CD4-positive, alpha-beta memory T cell (primary cell): ENCODE measurements at regions of chr17 and their contacts with region 1.

Region 1: DNA sequence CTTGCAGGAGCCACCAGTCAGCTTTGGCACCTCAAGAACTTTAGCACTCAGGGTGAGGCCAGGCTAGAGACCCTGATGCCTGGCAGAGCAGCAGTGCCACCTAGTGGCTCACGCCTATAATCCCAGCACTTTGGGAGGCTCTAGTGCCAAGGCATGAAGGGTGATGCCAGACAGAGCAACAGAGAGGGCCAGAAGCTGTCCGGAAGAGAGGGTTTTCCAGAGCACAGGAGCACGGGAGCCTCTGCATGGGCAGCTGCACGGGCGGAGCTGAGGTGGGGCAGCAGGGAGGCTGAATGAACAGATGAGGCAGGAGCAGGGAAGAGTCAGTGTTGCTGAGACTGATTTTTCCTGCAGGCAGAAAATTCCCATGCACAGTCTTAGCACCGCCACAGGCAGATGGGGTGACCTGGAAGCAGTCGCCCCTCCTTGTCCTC is 38.9 kb downstream of the MYH3 start:
- DNase-seq: peak in 4 of 5 donors; percentile 39 to 46 (median 46)
- H3K4me3 ChIP-seq: no peak overlapping the region
- H3K4me3 Mint-ChIP-seq: no peak overlapping the region
- H3K27ac ChIP-seq: no peak overlapping the region
- H3K27ac Mint-ChIP-seq: peak overlapping the region in 1 of 7 donors; percentile 38
- H3K4me1 ChIP-seq: no peaks in the 10 kb centered on the region
- H3K4me1 Mint-ChIP-seq: peaks cover 0 to 4% (median 0%) of the 10 kb centered on the region in 4 donors
- H3K27me3 ChIP-seq: no peaks in the 10 kb centered on the region
- H3K27me3 Mint-ChIP-seq: peaks cover 4 to 8% of the 10 kb centered on the region in 2 donors

Region 2: DNA sequence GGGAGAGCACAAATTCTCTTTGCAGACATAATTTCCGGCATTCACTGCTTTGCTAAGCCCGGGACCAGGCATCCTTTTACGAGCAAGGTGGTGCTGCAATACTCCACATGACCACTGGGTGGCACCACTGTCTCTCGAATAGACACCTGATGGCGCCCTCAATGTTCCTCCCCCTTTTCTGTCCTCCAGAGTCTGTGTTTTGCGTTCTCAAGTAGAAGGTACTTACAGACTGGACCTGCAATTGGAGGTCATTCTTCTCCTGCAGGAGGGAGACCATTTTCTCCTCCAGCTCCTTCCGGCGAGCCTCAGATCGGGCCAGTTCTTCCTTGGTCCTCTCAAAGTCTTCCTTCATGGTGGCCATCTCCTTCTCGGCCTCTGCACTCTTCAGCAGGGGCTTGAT is 290.6 kb before region 1 on chr17:
- CTCF ChIA-PET with region 1: interaction called, 3 read pairs
- POLR2A ChIA-PET with region 1: no interaction called
- intact Hi-C with region 1: loop called (anchors 5 kb)
- DNase-seq: peak in 4 of 5 donors; percentile 24 to 39 (median 37)
- H3K4me3 ChIP-seq: no peak overlapping the region
- H3K4me3 Mint-ChIP-seq: no peak overlapping the region
- H3K27ac ChIP-seq: no peak overlapping the region
- H3K27ac Mint-ChIP-seq: peak overlapping the region in 1 of 7 donors; percentile 4
- H3K4me1 ChIP-seq: no peaks in the 10 kb centered on the region
- H3K4me1 Mint-ChIP-seq: peaks cover 0 to 7% (median under 1%) of the 10 kb centered on the region in 4 donors
- H3K27me3 ChIP-seq: no peaks in the 10 kb centered on the region
- H3K27me3 Mint-ChIP-seq: peaks cover 0 to 2% of the 10 kb centered on the region in 2 donors

Region 3: DNA sequence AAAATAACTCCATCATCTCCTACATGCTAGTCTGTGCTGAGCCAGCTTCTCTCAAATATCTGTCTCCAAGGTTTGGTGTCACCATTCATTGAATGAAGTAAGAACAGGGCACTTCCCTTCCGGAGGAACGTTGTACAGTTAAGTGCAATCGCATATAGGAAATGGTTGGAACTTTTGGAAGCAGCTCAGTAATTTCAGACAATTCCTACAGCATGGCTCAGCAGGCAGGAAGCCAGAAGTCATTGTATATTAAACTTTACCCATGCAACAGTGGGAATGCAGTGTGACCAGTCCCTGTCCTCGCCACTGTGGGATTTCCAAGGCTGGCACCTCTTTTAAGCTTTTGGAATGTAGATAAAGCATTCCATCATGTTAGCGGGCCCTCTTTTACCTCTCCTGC is 17.6 kb before region 1 on chr17:
- CTCF ChIA-PET with region 1: interaction called, 94 read pairs
- POLR2A ChIA-PET with region 1: no interaction called
- intact Hi-C with region 1: no loop called
- DNase-seq: no peak
- H3K4me3 ChIP-seq: no peak overlapping the region
- H3K4me3 Mint-ChIP-seq: no peak overlapping the region
- H3K27ac ChIP-seq: no peak overlapping the region
- H3K27ac Mint-ChIP-seq: no peak overlapping the region
- H3K4me1 ChIP-seq: no peaks in the 10 kb centered on the region
- H3K4me1 Mint-ChIP-seq: no peaks in the 10 kb centered on the region
- H3K27me3 ChIP-seq: no peaks in the 10 kb centered on the region
- H3K27me3 Mint-ChIP-seq: peaks cover 13 to 14% of the 10 kb centered on the region in 2 donors

Region 4: GRCh38 chr17:10640475-10640874 is 22.3 kb after region 1 on chr17:
- CTCF ChIA-PET with region 1: interaction called, 185 read pairs
- POLR2A ChIA-PET with region 1: no interaction called
- intact Hi-C with region 1: no loop called
- DNase-seq: no peak
- H3K4me3 ChIP-seq: no peak overlapping the region
- H3K4me3 Mint-ChIP-seq: no peak overlapping the region
- H3K27ac ChIP-seq: no peak overlapping the region
- H3K27ac Mint-ChIP-seq: no peak overlapping the region
- H3K4me1 ChIP-seq: no peaks in the 10 kb centered on the region
- H3K4me1 Mint-ChIP-seq: peaks cover 0 to 2% (median 0%) of the 10 kb centered on the region in 4 donors
- H3K27me3 ChIP-seq: no peaks in the 10 kb centered on the region
- H3K27me3 Mint-ChIP-seq: no peaks in the 10 kb centered on the region

Region 5: GRCh38 chr17:10673312-10673711 is 55.1 kb after region 1 on chr17:
- CTCF ChIA-PET with region 1: interaction called, 11 read pairs
- POLR2A ChIA-PET with region 1: no interaction called
- intact Hi-C with region 1: no loop called
- DNase-seq: no peak
- H3K4me3 ChIP-seq: no peak overlapping the region
- H3K4me3 Mint-ChIP-seq: no peak overlapping the region
- H3K27ac ChIP-seq: no peak overlapping the region
- H3K27ac Mint-ChIP-seq: no peak overlapping the region
- H3K4me1 ChIP-seq: no peaks in the 10 kb centered on the region
- H3K4me1 Mint-ChIP-seq: no peaks in the 10 kb centered on the region
- H3K27me3 ChIP-seq: no peaks in the 10 kb centered on the region
- H3K27me3 Mint-ChIP-seq: no peaks in the 10 kb centered on the region